ENCODE measurements at regions of chr18 and their contacts with region 1.

Region 1: DNA sequence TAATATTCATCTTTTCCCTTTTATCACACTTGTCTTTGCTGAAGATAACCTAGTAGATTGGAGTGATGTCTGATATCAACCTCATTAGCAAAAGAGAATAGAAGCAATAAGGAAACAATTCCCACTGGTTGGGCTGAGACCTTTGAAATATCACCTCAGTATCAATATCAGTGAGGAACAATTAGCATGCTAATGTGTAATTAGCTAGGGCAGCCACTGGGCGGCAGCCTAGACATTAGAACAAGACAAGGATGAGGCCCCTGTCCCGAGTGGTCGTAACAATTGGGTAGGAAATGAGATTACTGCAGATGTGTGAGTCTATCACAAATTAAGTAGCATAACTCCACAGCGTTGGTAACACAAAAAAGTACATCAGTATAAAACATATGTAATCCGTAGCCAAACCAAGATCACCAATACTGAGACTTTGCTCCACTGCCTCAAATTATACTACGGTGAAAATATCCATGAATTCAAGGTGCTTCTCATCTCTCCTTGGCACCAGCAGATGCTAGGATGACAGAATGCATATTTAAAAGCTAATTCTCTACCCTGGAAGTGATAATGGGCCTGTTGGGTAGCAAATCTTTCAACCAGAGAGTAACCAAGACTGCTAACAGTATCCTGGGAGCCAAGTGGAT is 99.1 kb downstream of the ALPK2 start:
- DNase-seq: peak; percentile 47 to 84
- H3K4me3 ChIP-seq: no peak overlapping the region
- CTCF ChIP-seq: peak in 1 of 3 donors; percentile 44
- POLR2A ChIP-seq: no peak

Region 2: DNA sequence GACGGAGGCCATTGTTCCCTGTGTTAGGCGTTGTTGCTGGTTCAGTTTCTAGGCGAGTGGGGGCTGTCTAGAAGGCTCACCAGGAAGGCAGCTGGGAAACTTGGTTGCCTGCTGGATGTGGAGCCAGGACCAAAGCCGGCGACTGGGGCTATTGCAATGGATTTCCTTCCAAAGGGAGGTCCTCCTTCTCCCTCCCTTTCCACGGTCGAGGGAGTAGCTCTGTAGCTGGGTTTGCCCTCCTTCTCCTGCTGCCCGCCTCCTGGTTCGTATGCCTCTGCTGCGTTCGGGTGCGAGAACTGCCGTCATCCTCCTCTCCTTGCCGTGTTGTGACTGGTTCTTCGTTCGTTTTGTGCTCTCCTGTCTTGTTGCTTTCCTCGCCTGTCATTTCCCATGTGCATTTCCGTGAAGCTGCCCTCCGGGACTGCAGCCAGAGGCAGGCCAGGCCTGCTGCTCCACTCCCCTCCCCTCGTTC is 282.4 kb before region 1 on chr18:
- intact Hi-C with region 1: no loop called
- DNase-seq: no peak
- H3K4me3 ChIP-seq: no peak overlapping the region
- CTCF ChIP-seq: no peak
- POLR2A ChIP-seq: no peak

Region 3: DNA sequence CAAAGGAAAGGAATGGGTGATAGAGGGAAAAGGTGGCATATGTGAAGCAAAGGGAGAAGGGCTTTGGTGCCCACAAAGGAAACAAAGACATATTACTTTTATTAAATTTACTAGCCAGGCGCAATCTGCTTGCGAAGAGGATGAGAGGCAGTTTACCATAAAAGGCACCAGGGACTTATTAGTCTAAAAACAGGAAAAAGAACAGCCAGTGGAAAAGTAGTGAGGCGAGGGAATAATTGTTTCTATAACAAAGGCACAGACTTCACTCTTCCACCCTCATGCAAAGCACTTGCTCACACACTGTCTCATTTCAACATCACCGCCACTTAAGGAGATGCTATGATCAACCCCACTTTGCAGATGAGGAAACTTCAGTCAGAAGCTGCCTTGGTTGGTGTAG is 111.5 kb before region 1 on chr18:
- intact Hi-C with region 1: no loop called
- DNase-seq: no peak
- H3K4me3 ChIP-seq: no peak overlapping the region
- CTCF ChIP-seq: no peak
- POLR2A ChIP-seq: no peak

Region 4: GRCh38 chr18:58727776-58728500 is 198.1 kb after region 1 on chr18:
- intact Hi-C with region 1: no loop called
- DNase-seq: no peak
- H3K4me3 ChIP-seq: no peak overlapping the region
- CTCF ChIP-seq: no peak
- POLR2A ChIP-seq: no peak

Region 5: DNA sequence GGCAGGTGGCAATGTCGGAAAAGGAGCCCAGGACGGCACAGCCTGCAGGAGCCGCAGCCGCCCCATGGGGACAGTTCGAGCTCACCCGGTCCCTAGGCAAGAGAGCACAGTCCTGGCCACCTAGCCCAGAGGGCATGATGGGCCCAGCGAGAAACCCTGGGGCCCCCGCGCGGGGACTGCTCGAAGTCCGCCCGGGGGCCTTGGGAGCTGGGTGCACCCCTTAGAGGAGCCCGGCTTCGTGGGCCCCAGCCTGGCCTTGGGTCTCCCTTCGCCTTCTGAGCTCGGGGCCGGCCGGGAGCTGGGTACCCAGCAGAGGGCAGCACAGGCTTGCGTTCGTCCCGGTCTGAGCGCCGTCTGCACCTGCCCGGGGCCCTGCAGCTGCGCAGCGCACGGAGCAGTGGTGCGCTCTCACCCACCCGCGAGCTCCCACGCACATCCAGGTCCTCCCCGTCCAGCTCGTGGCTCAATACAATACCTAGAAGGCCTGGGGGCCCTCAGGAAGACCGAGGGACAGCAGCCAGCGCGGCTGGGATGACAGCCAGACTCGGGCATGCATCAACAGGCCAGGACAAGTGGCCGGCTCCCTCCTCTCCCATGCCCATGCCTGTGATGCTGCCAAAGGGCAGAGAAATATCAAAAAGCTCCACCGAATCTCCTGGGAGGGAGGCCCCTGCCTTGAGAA is 238.6 kb after region 1 on chr18:
- intact Hi-C with region 1: loop called (anchors 5 kb)
- DNase-seq: peak in 1 of 2 donors; percentile 93
- H3K4me3 ChIP-seq: no peak overlapping the region
- CTCF ChIP-seq: no peak
- POLR2A ChIP-seq: no peak

Region 6: DNA sequence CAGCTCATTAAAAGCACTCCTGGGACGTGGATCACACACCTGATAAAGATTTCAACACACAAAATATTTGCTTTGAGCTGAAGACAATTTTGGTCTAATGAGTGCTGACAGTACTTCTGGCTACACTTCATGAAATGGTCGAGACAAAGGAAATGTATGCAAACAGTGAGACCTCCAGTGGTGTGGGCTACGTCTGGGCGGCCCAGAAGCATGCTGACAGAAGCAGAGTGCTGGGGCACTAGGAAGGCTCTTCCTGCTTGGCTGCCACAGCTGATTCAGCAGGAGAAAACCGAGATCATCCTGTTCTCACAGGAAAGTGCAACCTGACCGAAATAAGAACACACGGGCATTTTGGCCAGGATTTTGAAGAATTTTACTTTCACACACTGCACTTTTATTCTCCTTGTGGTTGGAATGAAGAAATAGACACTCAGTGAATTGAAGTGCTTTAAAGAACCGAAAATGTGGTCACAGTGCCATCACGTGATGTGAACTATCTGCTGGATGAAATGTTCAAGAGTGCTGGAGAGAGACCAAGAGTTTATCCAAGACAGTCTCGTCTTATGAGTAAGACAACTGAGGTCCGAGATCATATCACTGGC is 1017.8 kb after region 1 on chr18:
- intact Hi-C with region 1: loop called (anchors 10 kb)
- DNase-seq: no peak
- H3K4me3 ChIP-seq: no peak overlapping the region
- CTCF ChIP-seq: no peak
- POLR2A ChIP-seq: no peak